T-cell (primary cell): ENCODE measurements at regions of chr10 and their contacts with region 1.

Region 1: DNA sequence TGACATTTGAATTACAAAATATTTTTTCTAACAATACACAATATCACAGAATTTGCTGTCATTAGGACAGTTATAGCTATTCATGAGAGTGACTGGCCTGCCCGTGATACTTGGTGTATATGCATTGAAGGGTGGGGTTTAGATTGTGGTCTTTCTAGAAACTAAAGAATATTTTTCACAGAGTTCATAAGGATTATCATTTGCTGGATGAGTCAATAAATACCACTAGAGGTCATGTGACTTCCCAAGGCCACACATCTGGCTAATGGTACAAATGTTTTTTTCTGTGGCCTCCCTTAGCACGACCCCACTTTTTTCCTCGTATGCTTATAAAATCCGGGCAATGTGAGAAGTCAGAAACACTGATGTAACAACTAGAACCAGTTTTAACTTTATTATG is 5.2 kb downstream of the OPTN start:
- DNase-seq: no peak
- ATAC-seq: no peak
- H3K4me3 ChIP-seq: no peak overlapping the region
- H3K4me3 Mint-ChIP-seq: peak overlapping the region in 1 of 3 donors; percentile 41
- H3K27ac ChIP-seq: peak overlapping the region; percentile 35
- H3K27ac Mint-ChIP-seq: peak overlapping the region; percentile 96 to 99
- H3K4me1 ChIP-seq: peaks cover 26 to 70% of the 10 kb centered on the region in 2 experiments
- H3K4me1 Mint-ChIP-seq: peaks cover 72 to 83% (median 82%) of the 10 kb centered on the region in 3 donors
- H3K27me3 ChIP-seq: no peaks in the 10 kb centered on the region
- H3K27me3 Mint-ChIP-seq: no peaks in the 10 kb centered on the region

Region 2: GRCh38 chr10:13117841-13118783 is 12.9 kb after region 1 on chr10:
- CTCF ChIA-PET with region 1: interaction called in 1 of 2 experiments, 12 read pairs
- POLR2A ChIA-PET with region 1: interaction called in 1 of 2 experiments, 10 read pairs
- DNase-seq: no peak
- ATAC-seq: no peak
- H3K4me3 ChIP-seq: no peak overlapping the region
- H3K4me3 Mint-ChIP-seq: peak overlapping the region in 1 of 3 donors; percentile 16
- H3K27ac ChIP-seq: no peak overlapping the region
- H3K27ac Mint-ChIP-seq: peak overlapping the region; percentile 24 to 29
- H3K4me1 ChIP-seq: peaks cover 0 to 9% of the 10 kb centered on the region in 2 experiments
- H3K4me1 Mint-ChIP-seq: peaks cover 27 to 34% (median 29%) of the 10 kb centered on the region in 3 donors
- H3K27me3 ChIP-seq: no peaks in the 10 kb centered on the region
- H3K27me3 Mint-ChIP-seq: no peaks in the 10 kb centered on the region

Region 3: DNA sequence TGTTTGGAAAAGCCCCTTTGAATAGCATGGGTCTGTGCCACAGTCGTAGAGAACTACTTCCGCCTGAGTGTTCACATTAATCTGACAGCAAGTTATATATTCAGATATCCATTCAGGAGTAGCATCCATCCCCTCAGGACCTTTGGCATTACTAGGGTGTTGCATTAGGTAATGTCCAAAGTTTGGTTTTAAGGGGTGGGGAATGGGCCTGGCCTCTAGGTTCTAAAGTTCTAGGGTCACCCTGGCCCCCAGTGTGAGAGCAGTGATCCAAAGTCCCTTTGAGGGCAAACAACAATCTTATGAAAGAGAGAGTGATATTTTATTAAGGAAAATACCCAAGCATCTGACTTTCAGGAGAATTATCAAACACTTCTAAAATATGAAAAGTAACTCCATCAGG is 68.4 kb after region 1 on chr10:
- CTCF ChIA-PET with region 1: no interaction called
- POLR2A ChIA-PET with region 1: no interaction called
- DNase-seq: no peak
- ATAC-seq: no peak
- H3K4me3 ChIP-seq: no peak overlapping the region
- H3K4me3 Mint-ChIP-seq: no peak overlapping the region
- H3K27ac ChIP-seq: no peak overlapping the region
- H3K27ac Mint-ChIP-seq: no peak overlapping the region
- H3K4me1 ChIP-seq: no peaks in the 10 kb centered on the region
- H3K4me1 Mint-ChIP-seq: no peaks in the 10 kb centered on the region
- H3K27me3 ChIP-seq: no peaks in the 10 kb centered on the region
- H3K27me3 Mint-ChIP-seq: no peaks in the 10 kb centered on the region

Region 4: GRCh38 chr10:14244147-14244546 is 1139.0 kb after region 1 on chr10:
- CTCF ChIA-PET with region 1: no interaction called
- POLR2A ChIA-PET with region 1: no interaction called
- DNase-seq: no peak
- ATAC-seq: no peak
- H3K4me3 ChIP-seq: no peak overlapping the region
- H3K4me3 Mint-ChIP-seq: no peak overlapping the region
- H3K27ac ChIP-seq: no peak overlapping the region
- H3K27ac Mint-ChIP-seq: no peak overlapping the region
- H3K4me1 ChIP-seq: no peaks in the 10 kb centered on the region
- H3K4me1 Mint-ChIP-seq: peaks cover 0 to 4% (median 4%) of the 10 kb centered on the region in 3 donors
- H3K27me3 ChIP-seq: peaks cover 2 to 10% of the 10 kb centered on the region in 2 experiments
- H3K27me3 Mint-ChIP-seq: peaks cover 25 to 31% of the 10 kb centered on the region in 2 donors